OCI-LY7 (cell line): ENCODE measurements at regions of chr2 and their contacts with region 1.

Region 1: GRCh38 chr2:74367789-74368188 is 12.3 kb downstream of the DCTN1 start:
- DNase-seq: no peak
- H3K4me3 ChIP-seq: no peak overlapping the region
- H3K27ac ChIP-seq: no peak overlapping the region
- H3K4me1 ChIP-seq: no peaks in the 10 kb centered on the region
- CTCF ChIP-seq: no peak

Region 2: DNA sequence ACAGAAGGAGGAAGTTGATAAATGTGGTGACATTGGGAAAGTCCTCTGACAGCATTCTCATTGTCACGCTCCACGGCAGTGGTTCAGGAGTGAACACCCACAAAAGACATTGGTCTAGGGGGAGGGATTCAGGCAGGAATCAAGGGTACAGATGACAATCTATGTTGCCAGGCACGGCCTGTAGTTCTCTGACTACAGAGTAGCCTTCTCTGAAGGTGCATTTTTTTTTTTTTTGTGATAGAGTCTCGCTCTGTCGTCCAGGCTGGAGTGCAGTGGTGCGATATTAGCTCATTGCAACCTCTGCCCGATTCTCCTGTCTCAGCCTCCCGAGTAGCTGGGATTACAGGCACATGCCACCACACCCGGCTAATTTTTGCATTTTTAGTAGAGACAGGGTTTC is 181.8 kb before region 1 on chr2:
- CTCF ChIA-PET with region 1: no interaction called
- POLR2A ChIA-PET with region 1: no interaction called
- intact Hi-C with region 1: no loop called
- DNase-seq: peak; percentile 75
- H3K4me3 ChIP-seq: peak overlapping the region; percentile 45
- H3K27ac ChIP-seq: peak overlapping the region; percentile 79
- H3K4me1 ChIP-seq: peaks cover 68% of the 10 kb centered on the region
- CTCF ChIP-seq: no peak

Region 3: DNA sequence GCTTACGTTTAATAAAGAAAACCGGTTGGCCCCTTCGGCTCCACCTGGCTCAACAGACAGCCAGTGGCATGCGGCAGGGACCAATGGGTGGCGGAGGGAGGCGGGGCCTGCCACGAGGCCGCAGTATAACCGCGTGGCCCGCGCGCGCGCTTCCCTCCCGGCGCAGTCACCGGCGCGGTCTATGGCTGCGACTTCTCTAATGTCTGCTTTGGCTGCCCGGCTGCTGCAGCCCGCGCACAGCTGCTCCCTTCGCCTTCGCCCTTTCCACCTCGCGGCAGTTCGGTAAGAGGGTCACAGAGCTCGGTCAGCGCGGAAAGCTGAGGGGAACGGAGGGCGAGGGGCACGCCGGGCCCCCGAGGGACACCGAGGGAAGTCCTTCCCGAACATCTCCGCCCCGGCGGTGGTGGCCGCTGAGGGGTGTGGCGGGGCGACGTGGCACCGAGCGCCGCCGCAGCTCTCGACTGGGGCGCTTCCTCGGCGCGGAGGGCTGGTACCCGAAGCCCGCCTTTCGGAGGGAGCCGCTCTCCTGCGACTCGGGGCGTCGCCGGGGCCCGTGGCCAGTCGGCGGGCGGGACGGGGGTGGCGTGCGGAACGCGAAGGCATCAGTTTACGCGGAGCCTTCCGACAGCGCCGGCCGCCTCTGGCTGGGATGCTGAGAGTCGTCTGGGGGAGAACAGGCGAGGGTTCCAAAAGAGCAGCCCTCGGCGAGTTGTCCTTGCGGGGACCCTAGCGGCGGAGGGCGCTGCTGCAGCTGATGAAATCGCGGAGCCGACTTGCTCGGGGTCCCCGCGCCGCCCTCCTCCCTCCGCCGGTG is 169.1 kb before region 1 on chr2 and contains the start of gene MTHFD2:
- CTCF ChIA-PET with region 1: no interaction called
- POLR2A ChIA-PET with region 1: no interaction called
- intact Hi-C with region 1: no loop called
- DNase-seq: peak; percentile 99
- H3K4me3 ChIP-seq: peak within 1 kb of the TSS; percentile 84
- H3K27ac ChIP-seq: peak within 1 kb of the TSS; percentile 88
- H3K4me1 ChIP-seq: peaks cover 49% of the 10 kb centered on the region
- CTCF ChIP-seq: peak; percentile 81
- total RNA-seq, gene MTHFD2: 220 and 250 TPM in 2 replicates

Region 4: DNA sequence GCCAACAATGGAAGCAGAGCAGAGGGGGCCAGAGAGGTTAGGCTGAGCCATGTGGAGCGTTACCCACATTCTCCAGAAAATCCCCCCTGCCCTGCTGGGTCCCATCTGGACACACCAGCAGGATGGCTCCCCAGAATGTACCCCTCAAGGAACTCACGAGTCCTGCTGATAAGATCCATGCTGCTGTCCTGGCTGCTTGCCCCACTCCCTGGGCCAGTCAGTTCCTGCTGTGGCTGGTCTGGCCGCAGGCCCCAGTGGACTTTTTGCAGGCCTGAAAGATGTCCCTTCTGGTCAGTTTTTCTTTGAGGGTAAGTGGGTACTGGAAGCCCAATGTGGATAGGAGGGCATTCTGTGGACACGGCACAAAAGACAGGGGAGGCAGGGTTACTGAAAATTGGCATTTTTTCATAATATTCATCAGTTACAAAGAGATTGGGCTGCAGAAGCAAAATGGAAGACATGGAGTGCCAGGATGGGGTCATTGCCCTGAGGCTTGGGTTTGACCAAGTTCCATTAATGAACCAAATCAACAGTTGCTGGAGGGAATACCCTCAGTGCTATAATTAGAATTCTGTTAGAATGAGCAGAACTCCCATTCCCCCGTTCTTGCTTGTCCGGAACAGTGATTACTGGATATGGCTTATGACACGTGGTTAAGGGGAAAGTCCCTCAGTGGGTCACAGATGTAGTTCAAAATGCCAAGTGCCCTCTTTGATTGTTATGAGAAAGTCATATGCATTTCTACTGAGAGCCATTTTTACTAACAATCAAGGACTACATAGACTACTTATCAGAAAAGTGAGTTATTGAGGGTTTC is 63.2 kb before region 1 on chr2:
- CTCF ChIA-PET with region 1: no interaction called
- POLR2A ChIA-PET with region 1: no interaction called
- intact Hi-C with region 1: no loop called
- DNase-seq: no peak
- H3K4me3 ChIP-seq: no peak overlapping the region
- H3K27ac ChIP-seq: no peak overlapping the region
- H3K4me1 ChIP-seq: no peaks in the 10 kb centered on the region
- CTCF ChIP-seq: no peak

Region 5: DNA sequence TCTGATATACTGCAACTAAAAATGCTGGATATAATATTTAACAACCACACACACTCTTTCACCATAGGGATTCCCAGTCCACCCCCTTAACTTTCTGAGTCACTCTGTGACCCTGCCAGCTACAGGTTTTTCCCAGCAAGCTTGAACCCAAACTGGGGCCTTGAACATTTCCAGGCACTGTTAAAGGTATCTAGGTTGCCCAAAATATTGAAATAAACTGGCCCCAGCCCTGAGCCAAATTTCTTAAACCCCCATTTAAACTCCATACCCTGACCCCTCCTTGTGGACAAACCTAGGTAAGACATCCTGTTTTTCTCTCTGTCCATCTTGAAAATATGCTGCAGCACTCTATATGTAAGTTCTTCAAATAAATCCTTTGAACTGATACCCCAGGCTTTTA is 32.0 kb after region 1 on chr2:
- CTCF ChIA-PET with region 1: no interaction called
- POLR2A ChIA-PET with region 1: no interaction called
- intact Hi-C with region 1: loop called (anchors 1 kb)
- DNase-seq: peak; percentile 62
- H3K4me3 ChIP-seq: no peak overlapping the region
- H3K27ac ChIP-seq: no peak overlapping the region
- H3K4me1 ChIP-seq: peaks cover 4% of the 10 kb centered on the region
- CTCF ChIP-seq: peak; percentile 85